Calu3 (cell line): ENCODE measurements at regions of chr3 and their contacts with region 1.

Region 1: GRCh38 chr3:5791544-5791943 is 604.0 kb downstream of the EDEM1 start:
- DNase-seq: no peak
- H3K4me3 Mint-ChIP-seq: no peak overlapping the region
- H3K27ac Mint-ChIP-seq: peak overlapping the region; percentile 23
- H3K4me1 Mint-ChIP-seq: no peaks in the 10 kb centered on the region
- H3K27me3 Mint-ChIP-seq: no peaks in the 10 kb centered on the region
- CTCF ChIP-seq: no peak

Region 2: DNA sequence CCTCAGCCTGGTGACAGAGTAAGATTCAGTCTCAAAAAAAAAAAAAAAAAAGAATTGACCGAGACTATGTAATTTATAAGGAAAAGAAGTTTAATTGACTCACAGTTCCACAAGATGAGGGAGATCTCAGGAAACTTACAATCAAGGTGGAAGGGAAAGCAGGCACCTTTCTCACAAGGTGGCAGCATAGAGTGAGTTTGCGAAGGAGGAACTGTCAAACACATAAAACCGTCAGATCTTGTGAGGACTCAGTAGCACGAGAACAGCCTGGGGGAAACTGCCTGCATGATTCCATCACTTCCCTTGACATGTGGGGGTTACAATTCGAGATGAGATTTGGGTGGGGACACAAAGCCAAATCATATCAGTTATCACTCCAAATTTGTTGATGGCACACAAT is 223.1 kb before region 1 on chr3:
- CTCF ChIA-PET with region 1: no interaction called
- intact Hi-C with region 1: loop called (anchors 10 kb)
- DNase-seq: peak; percentile 10
- H3K4me3 Mint-ChIP-seq: no peak overlapping the region
- H3K27ac Mint-ChIP-seq: no peak overlapping the region
- H3K4me1 Mint-ChIP-seq: no peaks in the 10 kb centered on the region
- H3K27me3 Mint-ChIP-seq: no peaks in the 10 kb centered on the region
- CTCF ChIP-seq: no peak

Region 3: GRCh38 chr3:5616873-5617272 is 174.7 kb before region 1 on chr3:
- CTCF ChIA-PET with region 1: no interaction called
- intact Hi-C with region 1: no loop called
- DNase-seq: no peak
- H3K4me3 Mint-ChIP-seq: no peak overlapping the region
- H3K27ac Mint-ChIP-seq: no peak overlapping the region
- H3K4me1 Mint-ChIP-seq: no peaks in the 10 kb centered on the region
- H3K27me3 Mint-ChIP-seq: no peaks in the 10 kb centered on the region
- CTCF ChIP-seq: no peak